Tibial artery (tissue), 4 donors: ENCODE measurements at regions of chr12 and their contacts with region 1.

Region 1: DNA sequence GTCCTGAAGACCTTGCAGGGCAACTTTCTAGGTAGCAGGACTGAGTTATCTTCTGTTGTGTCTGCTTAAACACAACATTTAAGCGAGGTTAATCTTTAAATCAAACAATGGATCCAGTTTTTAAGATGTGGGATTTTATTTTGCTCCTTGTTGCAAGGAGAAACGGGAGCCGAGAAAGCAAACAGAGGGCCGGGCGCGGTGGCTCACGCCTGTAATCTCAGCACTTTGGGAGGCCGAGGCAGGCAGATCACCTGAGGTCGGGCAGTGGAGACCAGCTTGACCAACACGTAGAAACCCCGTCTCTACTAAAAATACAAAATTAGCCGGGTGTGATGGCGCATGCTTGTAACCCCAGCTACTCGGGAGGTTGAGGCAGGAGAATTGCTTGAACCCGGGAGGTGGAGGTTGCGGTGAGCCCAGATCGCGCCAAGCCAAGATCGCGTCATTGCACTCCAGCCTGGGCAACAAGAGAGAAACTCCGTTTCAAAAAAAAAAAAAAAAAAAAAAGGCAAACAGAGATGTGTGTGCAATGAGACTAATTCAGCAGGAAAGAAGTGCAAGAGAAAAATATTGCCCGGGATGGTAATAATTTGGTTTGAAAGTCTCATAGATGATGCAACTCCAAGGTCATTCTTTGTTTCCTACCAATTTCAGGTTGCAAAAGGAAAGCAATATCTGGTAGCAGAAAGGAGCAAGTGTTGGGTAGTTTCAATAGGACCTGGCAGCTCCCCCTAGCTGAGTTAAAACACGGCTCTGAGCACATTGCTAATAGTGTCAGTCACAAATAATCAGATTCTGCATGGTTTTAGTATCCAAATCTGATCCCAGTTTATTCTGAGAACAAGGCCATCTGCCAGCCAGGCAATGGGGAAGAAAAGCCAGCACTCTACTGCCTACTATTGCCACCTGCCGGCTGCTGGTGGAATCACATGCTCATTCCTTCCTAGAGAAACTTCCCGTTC is 141.4 kb downstream of the PPM1H start:
- DNase-seq: peak; percentile 91 to 92
- H3K4me3 ChIP-seq: no peak overlapping the region
- H3K27ac ChIP-seq: peak overlapping the region; percentile 40 to 52
- H3K4me1 ChIP-seq: peaks cover 0 to 21% (median 9%) of the 10 kb centered on the region in 4 donors
- H3K27me3 ChIP-seq: no peaks in the 10 kb centered on the region
- CTCF ChIP-seq: peak; percentile 94 to 95

Region 2: GRCh38 chr12:62603061-62603810 is 190.3 kb before region 1 on chr12:
- intact Hi-C with region 1: loop called (anchors 5 kb)
- DNase-seq: peak; percentile 80 to 92
- H3K4me3 ChIP-seq: peak overlapping the region; percentile 81 to 87
- H3K27ac ChIP-seq: peak overlapping the region; percentile 96 to 99
- H3K4me1 ChIP-seq: peaks cover 0 to 24% (median 6%) of the 10 kb centered on the region in 4 donors
- H3K27me3 ChIP-seq: no peaks in the 10 kb centered on the region
- CTCF ChIP-seq: peak; percentile 73 to 74